ENCODE measurements at regions of chr14 and their contacts with region 1.

Region 1: GRCh38 chr14:104932676-104933631 is 8.3 kb downstream of the PLD4 start:
- DNase-seq: peak; percentile 86 to 92
- ATAC-seq: peak; percentile 82 to 92 (median 86)
- H3K4me3 ChIP-seq: peak overlapping the region; percentile 40 to 70 (median 66)
- H3K27ac ChIP-seq: peak overlapping the region in 7 of 10 donors; percentile 1 to 65 (median 58)
- H3K4me1 ChIP-seq: peaks cover 6 to 18% (median 14%) of the 10 kb centered on the region in 9 donors
- H3K27me3 ChIP-seq: peaks cover 0 to 44% (median 9%) of the 10 kb centered on the region in 7 donors
- CTCF ChIP-seq: peak; percentile 49 to 83 (median 73)

Region 2: GRCh38 chr14:104968153-104968527 is 35.2 kb after region 1 on chr14:
- intact Hi-C with region 1: loop called in 1 of 10 experiments (anchors 5 kb)
- DNase-seq: peak; percentile 82
- ATAC-seq: peak in 7 of 8 donors; percentile 41 to 81 (median 66)
- H3K4me3 ChIP-seq: peak overlapping the region; percentile 6 to 60 (median 44)
- H3K27ac ChIP-seq: peak overlapping the region in 9 of 10 donors; percentile 1 to 78 (median 66)
- H3K4me1 ChIP-seq: peaks cover 17 to 66% (median 37%) of the 10 kb centered on the region in 9 donors
- H3K27me3 ChIP-seq: peaks cover 0 to 33% (median 0%) of the 10 kb centered on the region in 7 donors
- CTCF ChIP-seq: no peak

Measured in heart right ventricle (tissue), 16 donors.